Calu3 (cell line): ENCODE measurements at regions of chr14 and their contacts with region 1.

Region 1: DNA sequence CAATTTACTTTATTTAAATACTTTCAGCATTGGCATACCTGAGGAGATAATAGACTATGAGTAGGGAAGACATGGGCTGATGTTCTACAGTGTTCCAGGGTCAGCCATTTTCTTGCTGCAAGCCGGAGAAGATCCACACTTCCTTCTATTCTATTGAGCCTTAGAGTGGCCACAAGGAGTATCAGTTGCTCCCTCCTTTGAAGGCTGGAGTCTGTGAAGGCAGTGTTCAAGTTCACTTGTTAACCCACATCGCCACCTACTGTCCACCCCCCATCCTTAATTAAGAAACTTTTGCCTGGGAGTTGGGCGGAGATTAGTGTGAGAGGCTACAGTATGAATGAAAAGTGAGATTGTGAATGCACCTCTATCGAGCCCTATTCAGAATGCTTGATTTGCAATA is 666.6 kb downstream of the NRXN3 start:
- DNase-seq: peak; percentile 78
- H3K4me3 Mint-ChIP-seq: no peak overlapping the region
- H3K27ac Mint-ChIP-seq: no peak overlapping the region
- H3K4me1 Mint-ChIP-seq: no peaks in the 10 kb centered on the region
- H3K27me3 Mint-ChIP-seq: peaks cover 58% of the 10 kb centered on the region
- CTCF ChIP-seq: peak; percentile 73

Region 2: GRCh38 chr14:78170203-78170602 is 666.6 kb before region 1 on chr14 and contains the start of gene NRXN3:
- CTCF ChIA-PET with region 1: no interaction called
- intact Hi-C with region 1: loop called (anchors 5 kb)
- DNase-seq: peak; percentile 35
- H3K4me3 Mint-ChIP-seq: no peak within 1 kb of the TSS
- H3K27ac Mint-ChIP-seq: no peak within 1 kb of the TSS
- H3K4me1 Mint-ChIP-seq: no peaks in the 10 kb centered on the region
- H3K27me3 Mint-ChIP-seq: peaks cover 96% of the 10 kb centered on the region
- CTCF ChIP-seq: no peak
- total RNA-seq, gene NRXN3: not detected in 2 replicates

Region 3: DNA sequence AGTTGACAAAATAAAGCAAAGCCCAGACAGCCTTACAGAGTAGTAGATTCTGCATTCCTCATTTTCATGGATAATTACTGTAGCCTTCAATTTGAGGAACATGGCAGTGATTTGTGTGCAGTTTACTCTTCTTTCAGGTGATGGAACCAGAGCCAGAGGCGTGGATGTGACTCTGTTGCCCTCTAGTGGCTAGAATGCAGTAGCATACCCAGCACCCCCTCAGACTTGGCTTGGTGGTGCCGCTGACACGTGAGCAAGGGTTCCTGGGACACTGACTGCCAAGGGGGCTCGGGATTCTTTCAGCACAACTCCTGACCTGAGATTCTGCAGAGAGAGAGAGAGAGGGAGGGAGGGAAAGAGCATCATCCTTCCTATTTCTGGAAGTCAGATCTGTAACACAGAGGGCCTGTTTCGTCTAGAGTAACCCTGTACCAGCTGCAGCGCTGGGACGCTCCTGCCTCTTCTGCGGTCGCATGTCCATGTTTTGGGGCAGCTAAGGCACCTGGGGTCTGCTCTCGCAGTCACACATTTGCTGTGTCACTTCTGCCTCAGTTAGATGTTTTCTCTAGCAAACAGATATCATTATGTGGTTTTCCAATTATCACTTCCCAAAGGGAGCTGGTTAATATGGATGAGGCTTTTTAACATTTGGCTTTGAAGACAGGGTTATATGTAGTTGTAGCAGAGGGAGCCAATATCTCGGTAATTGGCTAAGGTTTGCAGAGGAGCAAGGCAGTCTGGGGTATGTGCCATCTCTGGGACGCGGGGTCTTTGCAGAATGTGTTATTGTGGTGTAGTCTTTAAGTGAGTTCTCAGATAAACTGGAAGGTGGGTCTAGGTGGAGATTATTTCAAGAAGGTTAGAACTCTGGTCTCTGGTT is 238.5 kb before region 1 on chr14:
- CTCF ChIA-PET with region 1: interaction called, 3 read pairs
- intact Hi-C with region 1: loop called (anchors 2 kb)
- DNase-seq: peak; percentile 61
- H3K4me3 Mint-ChIP-seq: peak overlapping the region; percentile 8
- H3K27ac Mint-ChIP-seq: no peak overlapping the region
- H3K4me1 Mint-ChIP-seq: no peaks in the 10 kb centered on the region
- H3K27me3 Mint-ChIP-seq: peaks cover 75% of the 10 kb centered on the region
- CTCF ChIP-seq: peak; percentile 86

Region 4: GRCh38 chr14:78758332-78758731 is 78.4 kb before region 1 on chr14:
- CTCF ChIA-PET with region 1: no interaction called
- intact Hi-C with region 1: loop called (anchors 2 kb)
- DNase-seq: peak; percentile 35
- H3K4me3 Mint-ChIP-seq: no peak overlapping the region
- H3K27ac Mint-ChIP-seq: no peak overlapping the region
- H3K4me1 Mint-ChIP-seq: peaks cover 52% of the 10 kb centered on the region
- H3K27me3 Mint-ChIP-seq: no peaks in the 10 kb centered on the region
- CTCF ChIP-seq: peak; percentile 71